Psoas muscle (tissue), 8 donors: ENCODE measurements at regions of chr7 and their contacts with region 1.

Region 1: DNA sequence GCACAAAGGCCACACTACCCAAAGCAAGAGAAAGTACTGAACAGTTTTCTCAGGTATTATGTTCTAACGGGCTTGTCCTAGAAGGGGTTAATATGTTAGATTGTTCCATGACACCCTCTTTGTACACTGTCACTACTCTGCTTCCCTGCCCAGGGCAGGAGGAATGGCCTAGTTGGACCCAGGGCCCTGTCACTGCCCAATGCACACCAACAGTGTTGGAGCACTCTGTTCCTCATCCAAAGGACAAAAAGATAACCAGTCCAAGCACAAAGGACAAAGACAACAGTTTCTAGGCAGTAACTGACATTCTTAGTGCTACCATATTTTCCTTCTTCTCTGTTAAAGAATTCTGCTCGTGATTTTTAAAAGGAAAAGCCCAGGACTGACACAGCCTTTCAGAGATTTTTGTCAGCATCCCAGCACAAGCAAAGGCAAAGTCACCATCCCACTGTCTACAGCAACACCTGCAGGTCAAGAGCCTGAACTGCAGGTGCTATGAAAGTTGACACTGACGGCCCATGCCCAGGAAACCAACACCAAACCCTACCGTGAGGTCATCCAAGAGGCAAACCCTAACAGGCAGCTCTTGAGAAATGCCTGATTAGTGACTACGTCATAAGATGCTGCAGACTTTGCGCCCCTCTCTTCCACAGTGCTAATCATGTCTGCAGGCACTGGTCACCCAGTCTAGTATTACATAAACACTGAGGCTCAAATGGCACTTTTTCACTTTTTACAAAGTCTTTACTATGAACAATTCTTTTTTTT is 13.2 kb downstream of the NUDCD3 start:
- DNase-seq: peak; percentile 49 to 71
- ATAC-seq: peak; percentile 94 to 96 (median 96)
- H3K4me3 ChIP-seq: no peak overlapping the region
- H3K27ac ChIP-seq: no peak overlapping the region
- H3K4me1 ChIP-seq: peaks cover 23% of the 10 kb centered on the region
- H3K27me3 ChIP-seq: no peaks in the 10 kb centered on the region
- CTCF ChIP-seq: peak; percentile 95

Region 2: GRCh38 chr7:44240983-44241510 is 236.2 kb before region 1 on chr7:
- intact Hi-C with region 1: loop called (anchors 1 to 2 kb)
- DNase-seq: peak; percentile 74 to 87
- ATAC-seq: peak; percentile 89 to 96 (median 92)
- H3K4me3 ChIP-seq: no peak overlapping the region
- H3K27ac ChIP-seq: no peak overlapping the region
- H3K4me1 ChIP-seq: peaks cover 7% of the 10 kb centered on the region
- H3K27me3 ChIP-seq: no peaks in the 10 kb centered on the region
- CTCF ChIP-seq: peak; percentile 67

Region 3: DNA sequence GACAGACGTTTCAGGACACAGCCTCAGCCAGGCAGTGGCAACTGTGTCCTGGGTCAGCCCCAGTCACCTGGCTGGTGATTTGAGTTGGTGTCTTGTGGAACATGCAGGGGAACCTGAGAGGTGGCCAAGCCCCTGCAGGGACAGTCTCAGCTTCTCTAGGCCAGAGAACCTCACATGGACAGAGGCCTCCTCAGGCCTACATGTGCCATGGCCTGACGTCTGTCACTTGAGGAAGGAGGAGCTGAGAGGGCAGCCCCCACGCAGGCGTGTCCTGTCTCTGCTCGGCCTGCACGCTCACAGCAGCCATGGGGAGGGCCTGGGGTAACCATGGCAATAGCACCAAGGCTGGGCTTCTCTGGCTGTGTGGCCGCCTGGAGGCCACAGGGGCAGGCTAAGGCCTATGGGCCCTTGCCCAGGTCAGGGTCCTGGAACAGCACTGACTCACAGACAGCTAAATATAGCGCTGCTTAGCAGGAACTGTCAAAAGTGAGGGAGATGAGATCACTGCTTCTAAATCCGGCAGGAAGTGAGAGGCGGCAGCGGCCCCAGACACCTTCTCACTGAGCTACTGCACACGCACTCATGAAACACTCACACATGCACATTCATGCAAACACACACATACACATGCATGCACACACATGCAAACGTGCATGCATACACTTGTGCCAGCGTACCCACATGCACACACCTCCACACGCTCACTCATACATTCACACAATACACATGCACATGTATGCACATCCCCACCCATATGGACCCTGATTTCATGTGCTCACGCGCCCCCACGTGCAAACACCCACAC is 219.4 kb before region 1 on chr7:
- intact Hi-C with region 1: loop called in 1 of 2 experiments (anchors 5 kb)
- DNase-seq: peak; percentile 85 to 89
- ATAC-seq: peak; percentile 92 to 94 (median 93)
- H3K4me3 ChIP-seq: no peak overlapping the region
- H3K27ac ChIP-seq: peak overlapping the region; percentile 94
- H3K4me1 ChIP-seq: peaks cover 72% of the 10 kb centered on the region
- H3K27me3 ChIP-seq: no peaks in the 10 kb centered on the region
- CTCF ChIP-seq: peak; percentile 30

Region 4: GRCh38 chr7:44375236-44375699 is 102.0 kb before region 1 on chr7:
- intact Hi-C with region 1: loop called (anchors 1 to 2 kb)
- DNase-seq: peak; percentile 59 to 81
- ATAC-seq: peak; percentile 89 to 90 (median 90)
- H3K4me3 ChIP-seq: no peak overlapping the region
- H3K27ac ChIP-seq: no peak overlapping the region
- H3K4me1 ChIP-seq: peaks cover 3% of the 10 kb centered on the region
- H3K27me3 ChIP-seq: no peaks in the 10 kb centered on the region
- CTCF ChIP-seq: peak; percentile 67

Region 5: DNA sequence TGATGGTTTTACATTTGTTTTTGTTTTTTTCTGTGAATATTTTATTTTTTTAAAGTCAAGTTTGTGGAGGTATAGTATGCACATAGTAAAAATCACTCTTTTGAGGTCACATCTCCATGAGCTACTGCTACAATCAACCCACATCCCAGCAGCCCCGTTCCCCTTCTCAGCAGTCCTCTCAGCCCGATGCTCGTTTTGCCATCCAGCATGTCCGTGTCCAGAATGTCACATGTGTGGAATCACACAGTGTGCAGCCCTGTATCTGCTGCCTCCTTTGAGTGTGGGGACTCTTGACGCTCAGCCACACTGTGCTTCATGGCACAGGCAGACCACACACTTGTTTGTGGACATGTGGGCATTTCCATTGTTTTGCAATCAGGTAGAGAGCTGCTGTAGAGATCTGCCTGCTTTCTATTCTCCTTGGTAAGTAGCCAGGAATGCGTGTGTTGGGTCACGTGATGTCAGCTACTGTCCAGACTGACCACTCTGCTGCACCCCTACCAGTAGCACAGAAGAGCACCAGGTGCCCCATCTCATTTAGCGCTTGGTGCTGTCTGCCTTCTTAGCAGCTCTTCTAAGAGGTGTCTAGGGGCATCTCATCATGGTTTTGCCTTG is 80.2 kb before region 1 on chr7:
- intact Hi-C with region 1: loop called in 1 of 2 experiments (anchors 1 kb)
- DNase-seq: no peak
- ATAC-seq: peak in 2 of 4 donors; percentile 18 to 20
- H3K4me3 ChIP-seq: no peak overlapping the region
- H3K27ac ChIP-seq: peak overlapping the region; percentile 87
- H3K4me1 ChIP-seq: peaks cover 42% of the 10 kb centered on the region
- H3K27me3 ChIP-seq: no peaks in the 10 kb centered on the region
- CTCF ChIP-seq: no peak

Region 6: GRCh38 chr7:44431091-44431608 is 46.1 kb before region 1 on chr7:
- intact Hi-C with region 1: loop called in 1 of 2 experiments (anchors 5 kb)
- DNase-seq: no peak
- ATAC-seq: peak; percentile 57 to 66 (median 58)
- H3K4me3 ChIP-seq: no peak overlapping the region
- H3K27ac ChIP-seq: peak overlapping the region; percentile 56
- H3K4me1 ChIP-seq: peaks cover 52% of the 10 kb centered on the region
- H3K27me3 ChIP-seq: no peaks in the 10 kb centered on the region
- CTCF ChIP-seq: peak; percentile 27